Tibial artery (tissue), 4 donors: ENCODE measurements at regions of chr1 and their contacts with region 1.

Region 1: GRCh38 chr1:203628201-203629015 is 1.8 kb downstream of the ATP2B4 start:
- DNase-seq: peak; percentile 68 to 84
- H3K4me3 ChIP-seq: peak overlapping the region; percentile 61 to 67
- H3K27ac ChIP-seq: peak overlapping the region; percentile 85 to 86
- H3K4me1 ChIP-seq: peaks cover 0 to 49% (median 29%) of the 10 kb centered on the region in 4 donors
- H3K27me3 ChIP-seq: no peaks in the 10 kb centered on the region
- CTCF ChIP-seq: peak in 1 of 2 experiments; percentile 16

Region 2: GRCh38 chr1:203163891-203164635 is 464.3 kb before region 1 on chr1:
- intact Hi-C with region 1: no loop called
- DNase-seq: no peak
- H3K4me3 ChIP-seq: no peak overlapping the region
- H3K27ac ChIP-seq: no peak overlapping the region
- H3K4me1 ChIP-seq: no peaks in the 10 kb centered on the region
- H3K27me3 ChIP-seq: peaks cover 0 to 43% of the 10 kb centered on the region in 2 donors
- CTCF ChIP-seq: no peak

Region 3: GRCh38 chr1:203504397-203505250 is 123.8 kb before region 1 on chr1:
- intact Hi-C with region 1: loop called (anchors 5 kb)
- DNase-seq: peak; percentile 88 to 89
- H3K4me3 ChIP-seq: no peak overlapping the region
- H3K27ac ChIP-seq: no peak overlapping the region
- H3K4me1 ChIP-seq: peaks cover 0 to 36% (median 14%) of the 10 kb centered on the region in 4 donors
- H3K27me3 ChIP-seq: no peaks in the 10 kb centered on the region
- CTCF ChIP-seq: peak; percentile 83 to 89

Region 4: DNA sequence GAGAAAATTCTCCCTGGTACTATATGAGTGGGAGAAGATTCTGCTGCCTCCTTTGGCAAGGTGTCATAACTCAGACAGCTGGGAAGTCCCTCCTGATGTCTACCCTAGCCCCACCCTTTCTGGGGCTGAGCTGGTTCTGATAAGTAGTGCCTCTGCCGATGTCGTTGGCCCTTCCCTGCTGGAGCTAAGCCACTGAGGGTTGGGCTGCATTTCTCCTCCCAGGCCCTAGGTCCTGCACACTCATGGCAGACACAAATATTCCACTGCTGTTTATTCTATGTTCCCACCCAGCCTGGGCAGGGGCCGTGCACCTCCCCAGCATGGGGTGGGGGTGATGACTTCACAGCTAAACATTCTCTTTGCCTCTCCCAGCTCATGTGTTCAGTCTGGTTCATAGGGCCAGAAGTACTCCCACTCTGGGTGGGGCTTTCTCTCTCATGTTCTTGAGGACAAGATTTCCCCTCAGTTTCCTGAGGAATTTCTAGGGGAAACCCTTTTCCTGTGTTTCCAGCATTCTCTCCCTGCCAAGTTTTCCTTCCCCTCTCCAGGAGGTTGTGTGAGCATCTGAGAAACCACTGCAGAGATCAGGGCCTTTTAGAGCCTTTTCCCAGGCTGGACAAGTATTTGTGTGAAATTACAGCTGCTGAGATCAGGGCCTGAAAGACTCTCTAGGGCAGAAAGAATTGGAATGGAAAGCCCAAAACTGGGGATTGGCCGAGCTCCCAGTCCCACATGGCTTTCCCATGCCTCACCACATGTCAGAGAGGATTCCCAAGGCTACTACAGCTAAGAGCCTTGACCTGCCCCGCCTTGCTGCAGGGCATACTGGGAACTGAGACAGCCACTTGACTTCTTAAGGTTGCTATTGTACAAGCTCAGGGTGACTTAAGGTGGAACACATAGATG is 64.4 kb after region 1 on chr1:
- intact Hi-C with region 1: loop called (anchors 2 kb)
- DNase-seq: peak; percentile 94 to 97
- H3K4me3 ChIP-seq: no peak overlapping the region
- H3K27ac ChIP-seq: peak overlapping the region; percentile 86 to 91
- H3K4me1 ChIP-seq: peaks cover 0 to 88% (median 68%) of the 10 kb centered on the region in 4 donors
- H3K27me3 ChIP-seq: no peaks in the 10 kb centered on the region
- CTCF ChIP-seq: peak; percentile 16 to 33